PC-9 (cell line): ENCODE measurements at regions of chr9 and their contacts with region 1.

Region 1: DNA sequence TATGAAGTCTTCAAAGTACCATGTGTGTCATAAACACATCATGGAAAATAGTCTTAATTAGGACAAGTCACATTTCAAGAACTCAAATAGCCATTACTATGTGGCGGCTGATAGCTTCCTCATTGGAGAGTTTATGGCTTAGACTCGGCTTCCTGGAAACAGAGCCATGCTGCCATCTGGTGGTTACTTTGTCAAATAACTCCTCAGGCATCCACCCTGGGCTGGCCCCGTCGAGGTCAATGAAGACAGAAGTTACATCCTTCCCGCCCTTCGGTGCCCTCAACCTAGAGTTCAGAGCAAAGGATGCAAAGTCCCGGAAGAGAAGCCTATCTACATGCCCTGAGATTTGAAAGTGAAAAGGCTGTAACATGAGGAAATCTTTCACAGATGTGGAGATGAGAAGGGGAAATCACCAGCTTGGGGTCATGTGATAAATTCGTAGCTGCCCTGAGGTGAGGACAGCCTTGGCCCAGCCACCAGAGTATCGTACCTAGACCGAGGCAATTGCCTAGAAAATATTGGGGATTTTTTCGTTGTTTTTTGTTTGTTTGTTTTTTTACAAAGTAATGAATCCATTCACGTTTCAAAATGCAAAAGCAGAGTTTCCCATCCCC is 45.5 kb upstream of the ZNF169 start:
- DNase-seq: peak; percentile 60 to 65
- H3K4me3 ChIP-seq: no peak overlapping the region
- H3K27ac ChIP-seq: no peak overlapping the region
- H3K4me1 ChIP-seq: no peaks in the 10 kb centered on the region
- H3K27me3 ChIP-seq: no peaks in the 10 kb centered on the region
- CTCF ChIP-seq: peak; percentile 87

Region 2: GRCh38 chr9:94014065-94014654 is 199.5 kb before region 1 on chr9:
- CTCF ChIA-PET with region 1: interaction called, 22 read pairs
- POLR2A ChIA-PET with region 1: interaction called, 4 read pairs
- intact Hi-C with region 1: loop called (anchors 1 kb)
- DNase-seq: peak in 1 of 2 experiments; percentile 16
- H3K4me3 ChIP-seq: no peak overlapping the region
- H3K27ac ChIP-seq: no peak overlapping the region
- H3K4me1 ChIP-seq: no peaks in the 10 kb centered on the region
- H3K27me3 ChIP-seq: no peaks in the 10 kb centered on the region
- CTCF ChIP-seq: peak; percentile 73

Region 3: GRCh38 chr9:94139672-94140417 is 73.8 kb before region 1 on chr9:
- CTCF ChIA-PET with region 1: interaction called, 15 read pairs
- POLR2A ChIA-PET with region 1: no interaction called
- intact Hi-C with region 1: no loop called
- DNase-seq: peak in 1 of 2 experiments; percentile 79
- H3K4me3 ChIP-seq: no peak overlapping the region
- H3K27ac ChIP-seq: no peak overlapping the region
- H3K4me1 ChIP-seq: no peaks in the 10 kb centered on the region
- H3K27me3 ChIP-seq: no peaks in the 10 kb centered on the region
- CTCF ChIP-seq: no peak

Region 4: DNA sequence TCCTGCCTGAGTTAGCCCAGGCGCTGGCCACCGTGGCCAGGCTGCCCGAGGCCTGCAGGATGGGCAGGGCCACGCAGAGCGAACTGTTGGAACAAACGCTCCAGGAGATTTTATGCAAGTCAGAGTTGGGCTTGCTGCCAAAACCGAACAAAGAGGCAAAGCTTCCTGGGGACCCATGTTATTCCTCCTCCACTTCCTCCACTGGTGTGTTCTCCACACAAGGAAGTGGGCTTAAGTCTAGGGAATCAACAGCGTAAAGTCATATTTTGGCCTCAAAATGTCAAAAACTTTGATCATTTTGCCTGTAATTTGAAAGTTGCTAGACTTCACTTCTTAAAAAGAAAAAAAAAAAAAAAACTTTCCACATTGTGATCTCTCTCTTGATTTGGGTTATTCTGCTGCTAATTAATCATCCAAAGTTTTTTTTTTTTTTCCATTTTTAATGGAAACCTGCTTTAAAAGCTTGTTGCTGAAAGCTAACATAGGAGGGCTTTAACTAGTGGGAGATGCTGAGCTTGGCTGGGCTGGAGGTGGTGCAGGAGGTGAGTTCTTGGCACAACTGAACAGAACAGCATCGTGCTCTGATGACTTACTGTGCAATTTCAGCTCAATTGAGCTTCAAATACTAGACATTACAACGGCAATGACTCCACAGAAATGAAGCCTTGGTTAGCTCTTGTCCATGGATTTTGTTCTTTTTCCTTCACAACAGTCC is 56.4 kb before region 1 on chr9:
- CTCF ChIA-PET with region 1: interaction called, 3 read pairs
- POLR2A ChIA-PET with region 1: interaction called, 11 read pairs
- intact Hi-C with region 1: no loop called
- DNase-seq: peak in 1 of 2 experiments; percentile 79
- H3K4me3 ChIP-seq: no peak overlapping the region
- H3K27ac ChIP-seq: no peak overlapping the region
- H3K4me1 ChIP-seq: no peaks in the 10 kb centered on the region
- H3K27me3 ChIP-seq: 0 out of 2 replicates have a peak, but pooled peaks cover 4% of the 10 kb centered on the region
- CTCF ChIP-seq: no peak

Region 5: GRCh38 chr9:94250456-94250855 is 36.8 kb after region 1 on chr9:
- CTCF ChIA-PET with region 1: no interaction called
- POLR2A ChIA-PET with region 1: no interaction called
- intact Hi-C with region 1: no loop called
- DNase-seq: no peak
- H3K4me3 ChIP-seq: no peak overlapping the region
- H3K27ac ChIP-seq: no peak overlapping the region
- H3K4me1 ChIP-seq: no peaks in the 10 kb centered on the region
- H3K27me3 ChIP-seq: no peaks in the 10 kb centered on the region
- CTCF ChIP-seq: no peak